Panc1 (cell line): ENCODE measurements at regions of chr1 and their contacts with region 1.

Region 1: GRCh38 chr1:67685067-67685557 is at the start of gene GADD45A:
- DNase-seq: peak; percentile 98
- ATAC-seq: peak; percentile 89
- H3K4me3 ChIP-seq: peak within 1 kb of the TSS; percentile 84 to 95
- H3K27ac ChIP-seq: peak within 1 kb of the TSS; percentile 98
- H3K4me1 ChIP-seq: peaks cover 40% of the 10 kb centered on the region
- H3K27me3 ChIP-seq: no peaks in the 10 kb centered on the region
- CTCF ChIP-seq: no peak
- total RNA-seq, gene GADD45A: 106 TPM

Region 2: GRCh38 chr1:67535474-67535873 is 149.6 kb before region 1 on chr1:
- CTCF ChIA-PET with region 1: interaction called, 4 read pairs
- POLR2A ChIA-PET with region 1: interaction called, 18 read pairs
- in situ Hi-C with region 1: no loop called
- intact Hi-C with region 1: loop called (anchors 10 kb)
- DNase-seq: peak; percentile 70
- ATAC-seq: peak; percentile 87
- H3K4me3 ChIP-seq: no peak overlapping the region
- H3K27ac ChIP-seq: peak overlapping the region; percentile 79
- H3K4me1 ChIP-seq: peaks cover 18% of the 10 kb centered on the region
- H3K27me3 ChIP-seq: no peaks in the 10 kb centered on the region
- CTCF ChIP-seq: peak; percentile 98

Region 3: DNA sequence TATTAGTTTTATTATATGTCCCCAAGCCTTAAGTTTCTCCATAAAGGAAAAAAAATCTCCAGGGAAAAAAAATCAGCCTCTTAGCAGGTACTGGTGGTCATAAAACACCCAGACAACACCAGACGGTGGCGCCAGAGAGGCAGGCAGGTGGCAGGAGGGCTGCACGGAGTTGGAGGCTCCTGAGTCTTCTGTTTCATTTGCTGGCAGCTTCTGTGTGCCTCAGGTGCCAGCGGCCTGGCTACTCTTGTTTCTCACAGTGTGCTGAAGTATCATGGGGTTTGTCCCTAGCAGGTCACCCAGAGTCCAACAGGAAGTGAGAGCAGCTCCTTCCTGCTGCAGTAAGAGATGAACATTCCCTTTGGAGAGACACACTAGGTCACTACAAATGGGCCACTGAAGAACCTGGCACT is 123.4 kb before region 1 on chr1:
- CTCF ChIA-PET with region 1: interaction called, 9 read pairs
- POLR2A ChIA-PET with region 1: interaction called, 19 read pairs
- in situ Hi-C with region 1: no loop called
- intact Hi-C with region 1: loop called (anchors 1 kb)
- DNase-seq: peak; percentile 71
- ATAC-seq: peak; percentile 89
- H3K4me3 ChIP-seq: 0 out of 4 replicates have a peak overlapping the region, but pooled peaks of 1 of the 2 experiments have one; percentile 15
- H3K27ac ChIP-seq: peak overlapping the region; percentile 95
- H3K4me1 ChIP-seq: peaks cover 38% of the 10 kb centered on the region
- H3K27me3 ChIP-seq: no peaks in the 10 kb centered on the region
- CTCF ChIP-seq: peak; percentile 96

Region 4: DNA sequence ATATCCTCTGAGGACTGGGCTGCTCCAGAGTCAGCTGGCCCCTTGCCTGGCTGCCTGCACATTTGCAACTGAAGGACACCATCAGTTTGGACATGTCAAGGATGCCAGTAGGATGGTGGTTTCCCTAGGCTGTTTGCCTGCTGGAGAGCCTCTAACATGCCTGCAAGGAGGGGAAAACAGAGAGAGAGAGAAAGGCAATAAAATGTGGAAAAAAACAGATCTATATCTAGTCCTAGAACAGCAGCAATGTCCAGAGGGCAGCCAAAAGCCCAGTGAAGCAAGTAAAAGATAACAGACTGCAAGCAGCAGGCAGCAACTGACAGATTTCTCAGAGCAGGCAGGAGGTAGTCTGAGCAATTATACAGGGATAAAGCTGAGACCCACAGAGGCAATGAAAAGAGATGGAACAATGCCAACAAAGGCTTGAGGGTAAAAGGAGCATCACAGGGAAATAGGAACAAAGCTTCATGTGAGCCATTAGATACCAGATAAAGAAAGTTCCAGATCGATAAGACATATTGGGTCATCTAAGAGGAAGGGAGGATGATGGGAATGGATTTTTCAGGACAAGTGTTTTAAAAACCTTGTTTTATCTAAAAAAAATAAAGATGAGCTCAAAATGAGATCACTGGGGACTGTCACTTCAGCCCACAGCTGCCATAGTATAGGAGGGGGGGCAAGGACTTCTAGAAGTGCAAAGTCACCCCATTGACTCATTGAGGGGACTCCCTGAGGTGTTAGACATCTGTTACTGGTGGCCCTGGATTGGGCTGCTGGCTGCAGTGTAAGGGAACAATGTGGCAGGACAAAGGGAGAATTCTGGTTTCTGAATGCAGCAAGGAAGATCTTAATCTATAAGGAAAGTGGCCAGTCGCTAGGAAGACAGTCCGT is 38.7 kb before region 1 on chr1:
- CTCF ChIA-PET with region 1: no interaction called
- POLR2A ChIA-PET with region 1: interaction called, 4 read pairs
- in situ Hi-C with region 1: no loop called
- intact Hi-C with region 1: loop called (anchors 5 kb)
- DNase-seq: no peak
- ATAC-seq: peak; percentile 86
- H3K4me3 ChIP-seq: no peak overlapping the region
- H3K27ac ChIP-seq: peak overlapping the region; percentile 100
- H3K4me1 ChIP-seq: peaks cover 46% of the 10 kb centered on the region
- H3K27me3 ChIP-seq: no peaks in the 10 kb centered on the region
- CTCF ChIP-seq: no peak

Region 5: GRCh38 chr1:67748630-67749029 is 63.5 kb after region 1 on chr1:
- CTCF ChIA-PET with region 1: no interaction called
- POLR2A ChIA-PET with region 1: interaction called, 3 read pairs
- in situ Hi-C with region 1: no loop called
- intact Hi-C with region 1: loop called (anchors 5 kb)
- DNase-seq: no peak
- ATAC-seq: peak; percentile 43; the same call in 1 of the 2 replicates
- H3K4me3 ChIP-seq: no peak overlapping the region
- H3K27ac ChIP-seq: peak overlapping the region; percentile 88
- H3K4me1 ChIP-seq: peaks cover 52% of the 10 kb centered on the region
- H3K27me3 ChIP-seq: no peaks in the 10 kb centered on the region
- CTCF ChIP-seq: no peak

Region 6: GRCh38 chr1:67760030-67760821 is 75.1 kb after region 1 on chr1:
- CTCF ChIA-PET with region 1: interaction called, 6 read pairs
- POLR2A ChIA-PET with region 1: no interaction called
- in situ Hi-C with region 1: no loop called
- intact Hi-C with region 1: loop called (anchors 5 kb)
- DNase-seq: peak; percentile 68
- ATAC-seq: peak; percentile 87
- H3K4me3 ChIP-seq: no peak overlapping the region
- H3K27ac ChIP-seq: peak overlapping the region; percentile 86
- H3K4me1 ChIP-seq: peaks cover 24% of the 10 kb centered on the region
- H3K27me3 ChIP-seq: no peaks in the 10 kb centered on the region
- CTCF ChIP-seq: peak; percentile 89

Region 7: DNA sequence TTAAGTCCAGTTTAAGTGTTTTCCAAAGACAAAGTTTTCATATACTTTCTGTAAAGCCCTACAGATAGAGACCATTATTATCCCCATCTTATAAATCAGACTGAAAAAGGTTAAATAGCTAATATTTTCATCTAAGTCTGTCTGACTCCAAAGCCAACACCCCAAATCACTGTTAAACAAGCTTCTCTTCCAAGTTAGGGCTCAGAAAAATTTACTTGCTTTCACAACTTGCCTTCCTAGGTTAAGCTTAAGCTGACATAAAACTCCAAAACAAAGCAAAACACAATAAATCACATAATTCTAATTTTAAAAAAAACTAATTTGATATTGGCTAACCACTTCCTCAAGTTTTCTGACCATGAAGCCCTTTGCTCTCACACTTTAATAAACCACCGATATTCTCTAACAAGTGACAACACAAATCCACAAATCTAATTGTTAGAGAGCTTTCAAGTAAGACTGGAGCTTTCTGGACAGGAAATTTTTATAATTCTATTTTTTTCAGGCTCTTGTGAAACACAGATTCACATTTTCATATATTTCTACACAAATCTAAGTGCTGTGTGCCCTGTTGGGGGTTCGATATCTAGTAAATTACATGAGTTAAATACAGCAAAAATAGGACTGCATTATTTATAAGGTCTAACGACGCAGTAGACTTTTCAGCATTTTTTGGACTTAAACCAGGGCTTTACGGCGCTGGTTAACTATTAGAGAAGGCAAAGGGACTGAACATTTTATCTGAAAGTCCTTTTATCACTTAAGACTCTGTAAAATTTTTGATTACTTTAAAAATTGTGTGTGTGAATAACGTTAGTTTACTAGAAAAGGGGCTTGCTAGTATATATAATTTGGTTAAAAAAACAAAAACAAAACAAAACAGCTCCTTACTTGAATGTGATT is 146.1 kb after region 1 on chr1:
- CTCF ChIA-PET with region 1: no interaction called
- POLR2A ChIA-PET with region 1: no interaction called
- in situ Hi-C with region 1: no loop called
- intact Hi-C with region 1: no loop called
- DNase-seq: no peak
- ATAC-seq: no peak
- H3K4me3 ChIP-seq: peak overlapping the region; percentile 79 to 93
- H3K27ac ChIP-seq: peak overlapping the region; percentile 92
- H3K4me1 ChIP-seq: peaks cover 18% of the 10 kb centered on the region
- H3K27me3 ChIP-seq: no peaks in the 10 kb centered on the region
- CTCF ChIP-seq: no peak